Heart right ventricle (tissue), 16 donors: ENCODE measurements at regions of chr7 and their contacts with region 1.

Region 1: GRCh38 chr7:148084138-148084537 is 506.4 kb upstream of the C7orf33 start:
- DNase-seq: peak in 1 of 2 donors; percentile 33
- ATAC-seq: peak in 2 of 8 donors; percentile 33 to 66
- H3K4me3 ChIP-seq: no peak overlapping the region
- H3K27ac ChIP-seq: no peak overlapping the region
- H3K4me1 ChIP-seq: no peaks in the 10 kb centered on the region
- H3K27me3 ChIP-seq: peaks cover 0 to 11% (median 3%) of the 10 kb centered on the region in 7 donors
- CTCF ChIP-seq: peak; percentile 39 to 72 (median 64)

Region 2: GRCh38 chr7:146736446-146737190 is 1347.5 kb before region 1 on chr7:
- intact Hi-C with region 1: loop called in 1 of 10 experiments (anchors 10 kb)
- DNase-seq: no peak
- ATAC-seq: no peak
- H3K4me3 ChIP-seq: no peak overlapping the region
- H3K27ac ChIP-seq: no peak overlapping the region
- H3K4me1 ChIP-seq: no peaks in the 10 kb centered on the region
- H3K27me3 ChIP-seq: no peaks in the 10 kb centered on the region
- CTCF ChIP-seq: peak in 3 of 9 donors; percentile 14 to 22 (median 21)

Region 3: DNA sequence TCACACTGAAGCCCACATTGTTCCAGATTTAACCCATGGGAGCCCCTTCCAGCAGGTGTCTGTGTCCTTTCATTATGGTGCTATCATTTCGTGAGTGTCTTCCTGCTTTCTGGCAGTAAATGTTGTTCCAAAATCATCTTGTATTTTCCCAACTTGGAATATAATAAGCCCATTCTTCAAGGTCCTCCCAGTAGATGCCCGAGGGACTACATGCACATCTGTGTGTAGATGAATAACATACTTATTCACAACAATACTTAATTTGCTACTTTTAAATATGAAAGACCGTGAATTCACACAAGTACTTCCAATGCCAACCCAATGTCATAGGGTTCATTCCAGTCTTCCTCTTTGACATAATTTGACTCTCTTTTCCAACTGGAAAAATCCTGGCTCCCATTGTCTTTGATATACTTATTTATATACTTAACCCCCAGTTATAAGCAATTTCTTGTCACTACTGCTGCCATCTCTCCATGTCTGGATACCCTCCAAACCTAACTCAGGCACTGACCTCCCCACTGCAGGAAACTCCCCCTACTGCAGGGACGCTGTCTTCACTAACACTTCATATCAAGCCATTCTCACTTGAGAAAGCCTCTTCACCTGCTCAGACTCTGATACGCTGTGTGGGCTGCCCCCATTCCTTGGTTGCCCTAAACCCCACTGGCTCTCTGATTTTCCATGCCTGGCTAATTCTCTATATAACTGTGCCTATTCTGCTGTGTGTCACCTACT is 848.3 kb before region 1 on chr7:
- intact Hi-C with region 1: loop called in 3 of 10 experiments (anchors 5 to 10 kb)
- DNase-seq: no peak
- ATAC-seq: no peak
- H3K4me3 ChIP-seq: no peak overlapping the region
- H3K27ac ChIP-seq: no peak overlapping the region
- H3K4me1 ChIP-seq: no peaks in the 10 kb centered on the region
- H3K27me3 ChIP-seq: no peaks in the 10 kb centered on the region
- CTCF ChIP-seq: no peak

Region 4: GRCh38 chr7:147245292-147245691 is 838.8 kb before region 1 on chr7:
- intact Hi-C with region 1: loop called in 4 of 10 experiments (anchors 5 to 10 kb)
- DNase-seq: peak in 1 of 2 donors; percentile 5
- ATAC-seq: no peak
- H3K4me3 ChIP-seq: no peak overlapping the region
- H3K27ac ChIP-seq: no peak overlapping the region
- H3K4me1 ChIP-seq: no peaks in the 10 kb centered on the region
- H3K27me3 ChIP-seq: peaks cover 0 to 4% (median 0%) of the 10 kb centered on the region in 7 donors
- CTCF ChIP-seq: peak in 8 of 9 donors; percentile 25 to 70 (median 62)

Region 5: DNA sequence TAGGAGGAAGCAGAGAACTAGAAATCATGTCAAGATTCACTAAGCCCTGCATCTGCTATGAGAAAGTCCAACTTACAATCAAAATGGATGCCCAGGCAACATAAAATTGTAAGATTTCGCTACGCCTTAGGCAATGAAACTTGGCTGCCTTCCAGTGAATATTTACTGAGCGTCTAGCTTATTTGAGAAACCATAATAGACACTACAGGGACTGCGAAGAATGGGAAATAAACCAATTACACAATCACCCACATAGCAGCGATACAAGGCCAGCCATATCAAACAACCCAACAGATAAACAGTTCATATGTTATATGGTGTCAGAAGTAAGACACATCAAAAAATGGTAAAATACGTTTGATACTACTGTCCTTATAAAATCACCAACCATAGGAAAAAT is 38.6 kb before region 1 on chr7:
- intact Hi-C with region 1: no loop called
- DNase-seq: no peak
- ATAC-seq: no peak
- H3K4me3 ChIP-seq: no peak overlapping the region
- H3K27ac ChIP-seq: no peak overlapping the region
- H3K4me1 ChIP-seq: no peaks in the 10 kb centered on the region
- H3K27me3 ChIP-seq: peaks cover 0 to 5% (median 0%) of the 10 kb centered on the region in 7 donors
- CTCF ChIP-seq: no peak

Region 6: GRCh38 chr7:148173369-148173768 is 89.2 kb after region 1 on chr7:
- intact Hi-C with region 1: no loop called
- DNase-seq: no peak
- ATAC-seq: no peak
- H3K4me3 ChIP-seq: no peak overlapping the region
- H3K27ac ChIP-seq: no peak overlapping the region
- H3K4me1 ChIP-seq: no peaks in the 10 kb centered on the region
- H3K27me3 ChIP-seq: peaks cover 0 to 15% (median 0%) of the 10 kb centered on the region in 7 donors
- CTCF ChIP-seq: no peak